Activated naive CD4-positive, alpha-beta T cell treated with anti-CD3 and anti-CD28 coated beads for 36 hours (primary cell): ENCODE measurements at regions of chrX and their contacts with region 1.

Region 1: GRCh38 chrX:78517124-78517523 is 142.0 kb downstream of the RTL3 start:
- DNase-seq: peak; percentile 76
- H3K4me3 Mint-ChIP-seq: no peak overlapping the region
- H3K27ac Mint-ChIP-seq: peak overlapping the region; percentile 86
- H3K4me1 Mint-ChIP-seq: peaks cover 40% of the 10 kb centered on the region
- H3K27me3 Mint-ChIP-seq: no peaks in the 10 kb centered on the region

Region 2: DNA sequence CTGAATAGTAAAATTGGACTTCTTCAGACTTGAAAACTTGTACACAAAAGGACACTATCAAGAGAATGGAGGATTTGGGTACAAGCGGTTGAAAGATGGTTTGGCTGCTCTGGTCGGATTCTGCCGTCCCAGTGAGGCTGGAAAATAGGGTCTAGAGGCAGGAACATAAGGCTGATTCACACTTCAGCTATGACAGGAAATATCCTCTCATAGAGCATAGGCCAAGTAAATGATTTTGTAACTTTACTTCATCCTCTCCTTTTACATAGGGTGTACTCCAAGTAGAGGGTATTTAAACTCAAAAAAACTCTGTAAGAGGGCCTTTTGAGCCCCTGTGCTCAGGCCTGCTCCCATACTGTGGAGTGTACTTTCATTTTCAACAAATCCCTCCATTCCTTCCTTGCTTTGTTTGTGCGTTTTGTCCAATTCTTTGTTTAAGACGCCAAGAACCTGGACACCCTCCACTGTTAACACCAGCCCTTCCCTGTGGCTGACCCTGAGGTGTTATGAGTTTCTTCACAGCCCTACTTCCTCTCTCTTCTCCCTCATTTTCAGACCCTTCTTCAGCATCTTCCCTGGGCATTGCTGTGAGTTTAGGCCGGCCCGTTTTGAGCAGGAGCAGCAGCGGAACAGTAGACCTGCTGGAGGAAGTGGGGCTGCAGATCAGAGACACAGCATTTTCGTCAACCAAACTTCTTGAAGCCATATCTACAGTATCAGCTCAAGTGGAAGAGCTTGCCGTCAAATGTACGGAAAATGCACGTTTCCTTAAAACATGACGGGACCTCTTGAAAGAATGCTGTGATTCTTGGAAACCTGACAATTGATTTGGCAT is 554.8 kb before region 1 on chrX:
- CTCF ChIA-PET with region 1: no interaction called
- intact Hi-C with region 1: loop called (anchors 5 kb)
- DNase-seq: peak; percentile 14
- H3K4me3 Mint-ChIP-seq: peak overlapping the region; percentile 75
- H3K27ac Mint-ChIP-seq: peak overlapping the region; percentile 93
- H3K4me1 Mint-ChIP-seq: peaks cover 44% of the 10 kb centered on the region
- H3K27me3 Mint-ChIP-seq: no peaks in the 10 kb centered on the region

Region 3: GRCh38 chrX:78139160-78140123 is 377.7 kb before region 1 on chrX and contains the start of gene TAF9B:
- CTCF ChIA-PET with region 1: interaction called, 5 read pairs
- intact Hi-C with region 1: loop called (anchors 2 kb)
- DNase-seq: peak; percentile 89
- H3K4me3 Mint-ChIP-seq: peak within 1 kb of the TSS; percentile 89
- H3K27ac Mint-ChIP-seq: peak within 1 kb of the TSS; percentile 90
- H3K4me1 Mint-ChIP-seq: peaks cover 4% of the 10 kb centered on the region
- H3K27me3 Mint-ChIP-seq: no peaks in the 10 kb centered on the region
- total RNA-seq, gene TAF9B: 25.9 to 27.2 TPM

Region 4: DNA sequence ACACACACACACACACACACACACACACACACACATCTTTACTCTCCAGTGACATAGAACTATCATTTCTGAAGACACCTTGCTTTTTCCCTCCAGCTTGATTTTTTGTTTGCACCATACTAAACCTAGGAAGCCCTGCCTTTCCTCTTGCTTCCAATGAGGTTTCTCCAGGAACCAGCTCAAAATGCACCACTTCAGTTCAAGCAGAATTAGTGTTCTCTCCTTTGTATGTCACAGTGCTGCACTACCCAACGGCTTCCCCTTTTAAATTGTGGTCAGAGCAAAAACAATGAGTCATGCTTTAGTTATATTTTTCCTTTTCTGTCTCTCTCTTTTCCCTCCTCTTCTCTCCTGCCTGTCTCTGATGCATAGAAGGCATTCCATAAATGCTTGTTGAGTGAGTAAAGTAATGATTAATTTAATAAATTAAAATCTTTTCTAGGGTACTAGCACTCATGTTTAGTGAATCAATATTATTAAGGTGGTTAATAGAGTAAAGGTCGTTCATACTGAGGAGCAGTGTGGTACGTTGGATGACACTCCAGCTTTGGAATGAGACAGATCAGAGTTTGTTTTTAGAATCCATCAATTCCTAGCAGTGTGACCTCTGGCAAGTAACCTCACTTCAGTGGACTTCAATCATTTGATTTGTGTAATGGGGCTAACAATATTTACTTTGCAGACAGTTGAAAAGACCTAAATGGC is 136.1 kb after region 1 on chrX:
- CTCF ChIA-PET with region 1: no interaction called
- intact Hi-C with region 1: loop called (anchors 1 kb)
- DNase-seq: no peak
- H3K4me3 Mint-ChIP-seq: no peak overlapping the region
- H3K27ac Mint-ChIP-seq: no peak overlapping the region
- H3K4me1 Mint-ChIP-seq: peaks cover 15% of the 10 kb centered on the region
- H3K27me3 Mint-ChIP-seq: no peaks in the 10 kb centered on the region

Region 5: GRCh38 chrX:78796916-78797315 is 279.8 kb after region 1 on chrX:
- CTCF ChIA-PET with region 1: no interaction called
- intact Hi-C with region 1: no loop called
- DNase-seq: no peak
- H3K4me3 Mint-ChIP-seq: no peak overlapping the region
- H3K27ac Mint-ChIP-seq: no peak overlapping the region
- H3K4me1 Mint-ChIP-seq: peaks cover 16% of the 10 kb centered on the region
- H3K27me3 Mint-ChIP-seq: no peaks in the 10 kb centered on the region

Region 6: GRCh38 chrX:79161655-79162054 is 644.5 kb after region 1 on chrX:
- CTCF ChIA-PET with region 1: no interaction called
- intact Hi-C with region 1: loop called (anchors 5 kb)
- DNase-seq: peak; percentile 51
- H3K4me3 Mint-ChIP-seq: peak overlapping the region; percentile 81
- H3K27ac Mint-ChIP-seq: peak overlapping the region; percentile 98
- H3K4me1 Mint-ChIP-seq: peaks cover 55% of the 10 kb centered on the region
- H3K27me3 Mint-ChIP-seq: no peaks in the 10 kb centered on the region